ENCODE measurements at regions of chr1 and their contacts with region 1.

Region 1: GRCh38 chr1:18913065-18913835 is 10.9 kb upstream of the ALDH4A1 start:
- DNase-seq: peak; percentile 74 to 92
- ATAC-seq: peak; percentile 83 to 91
- H3K4me3 ChIP-seq: no peak overlapping the region
- H3K27ac ChIP-seq: peak overlapping the region; percentile 46 to 79; a peak in 4 of 6 replicates
- H3K4me1 ChIP-seq: peaks cover 24% of the 10 kb centered on the region
- CTCF ChIP-seq: peak; percentile 95
- EP300 ChIP-seq: no peak
- POLR2A ChIP-seq: no peak
- RAD21 ChIP-seq: peak; percentile 80 to 89

Region 2: GRCh38 chr1:18783705-18784481 is 129.4 kb before region 1 on chr1:
- CTCF ChIA-PET with region 1: no interaction called
- POLR2A ChIA-PET with region 1: no interaction called
- DNase-seq: no peak
- ATAC-seq: no peak
- H3K4me3 ChIP-seq: no peak overlapping the region
- H3K27ac ChIP-seq: no peak overlapping the region
- H3K4me1 ChIP-seq: no peaks in the 10 kb centered on the region
- CTCF ChIP-seq: no peak
- EP300 ChIP-seq: no peak
- POLR2A ChIP-seq: no peak
- RAD21 ChIP-seq: no peak

Region 3: DNA sequence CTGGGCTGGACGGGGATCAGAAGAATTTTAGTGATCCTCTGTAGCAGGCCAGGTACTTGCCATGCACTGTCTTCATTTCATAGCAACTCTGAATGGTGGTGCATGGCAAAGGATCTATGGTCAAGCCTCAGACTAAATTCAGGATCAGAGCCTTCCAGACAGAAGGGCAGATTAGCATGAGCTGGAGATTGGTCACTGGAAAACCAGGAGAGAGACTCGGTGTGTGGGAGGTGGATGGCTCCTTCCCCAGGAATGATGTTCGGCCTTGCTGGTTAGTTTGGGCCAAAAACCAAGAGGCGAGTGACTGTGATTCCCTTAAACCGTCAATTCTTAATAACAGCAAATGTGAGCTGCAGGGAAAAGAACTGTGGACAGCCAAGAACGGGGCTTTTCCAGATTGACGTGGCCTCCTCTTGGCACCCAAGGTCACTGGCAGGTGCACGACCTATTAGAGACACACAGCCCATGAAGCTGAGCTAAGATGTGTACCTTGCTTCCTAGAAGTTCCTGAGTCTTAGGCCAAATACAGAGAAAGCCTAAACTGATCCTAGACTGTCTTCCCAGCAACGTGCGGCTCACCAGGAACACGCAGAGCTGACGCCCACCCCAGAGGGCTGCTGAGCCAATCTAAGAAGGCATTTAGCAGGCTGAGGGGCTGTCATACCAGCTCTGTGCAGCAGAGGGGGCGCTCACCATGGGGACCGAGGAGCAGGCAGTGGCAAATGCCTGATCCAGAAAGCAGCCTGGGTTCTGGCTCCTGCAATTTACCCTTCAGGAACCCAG is 29.4 kb before region 1 on chr1:
- CTCF ChIA-PET with region 1: interaction called, 17 read pairs
- POLR2A ChIA-PET with region 1: no interaction called
- DNase-seq: peak; percentile 50 to 61
- ATAC-seq: peak; percentile 73 to 90
- H3K4me3 ChIP-seq: no peak overlapping the region
- H3K27ac ChIP-seq: no peak overlapping the region; a peak in 1 of 6 replicates
- H3K4me1 ChIP-seq: peaks cover 9% of the 10 kb centered on the region; the same call in 2 of the 3 replicates
- CTCF ChIP-seq: peak; percentile 63
- EP300 ChIP-seq: no peak
- POLR2A ChIP-seq: no peak
- RAD21 ChIP-seq: peak; percentile 77 to 81

Region 4: GRCh38 chr1:18926315-18927081 is 13.2 kb after region 1 on chr1:
- CTCF ChIA-PET with region 1: interaction called, 77 read pairs
- POLR2A ChIA-PET with region 1: interaction called, 3 read pairs
- DNase-seq: peak; percentile 73 to 84
- ATAC-seq: peak; percentile 63 to 67; a peak in 5 of 6 replicates
- H3K4me3 ChIP-seq: no peak overlapping the region
- H3K27ac ChIP-seq: peak overlapping the region; percentile 78 to 94
- H3K4me1 ChIP-seq: peaks cover 83% of the 10 kb centered on the region
- CTCF ChIP-seq: no peak
- EP300 ChIP-seq: no peak
- POLR2A ChIP-seq: no peak
- RAD21 ChIP-seq: no peak

Region 5: GRCh38 chr1:18965206-18966173 is 52.2 kb after region 1 on chr1:
- CTCF ChIA-PET with region 1: interaction called, 23 read pairs
- POLR2A ChIA-PET with region 1: no interaction called
- DNase-seq: peak in 1 of 2 experiments; percentile 56
- ATAC-seq: peak; percentile 56 to 58; a peak in 4 of 6 replicates
- H3K4me3 ChIP-seq: no peak overlapping the region
- H3K27ac ChIP-seq: peak overlapping the region; percentile 15 to 76; a peak in 5 of 6 replicates
- H3K4me1 ChIP-seq: peaks cover 35% of the 10 kb centered on the region
- CTCF ChIP-seq: no peak
- EP300 ChIP-seq: no peak
- POLR2A ChIP-seq: no peak
- RAD21 ChIP-seq: no peak

Region 6: DNA sequence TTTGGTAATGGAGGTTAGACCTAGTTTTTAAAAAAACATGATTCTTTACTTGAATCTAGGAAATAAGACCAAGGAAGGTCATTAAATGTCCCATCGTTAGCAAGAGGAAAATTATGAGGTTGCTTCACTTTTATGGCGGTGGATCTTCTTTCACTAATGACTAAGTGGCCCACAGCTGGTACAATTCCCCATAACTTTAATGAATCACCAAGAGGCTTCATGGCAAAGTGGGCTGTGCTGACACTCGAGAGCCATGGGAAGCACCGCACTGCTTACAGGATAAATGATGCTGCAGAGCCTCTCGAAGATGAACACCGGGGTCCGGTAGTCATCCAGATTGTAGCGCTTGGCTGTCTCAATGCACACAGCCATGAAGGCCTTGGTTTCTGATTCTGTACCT is 188.0 kb after region 1 on chr1:
- CTCF ChIA-PET with region 1: interaction called, 319 read pairs
- POLR2A ChIA-PET with region 1: no interaction called
- DNase-seq: no peak
- ATAC-seq: no peak
- H3K4me3 ChIP-seq: no peak overlapping the region
- H3K27ac ChIP-seq: no peak overlapping the region
- H3K4me1 ChIP-seq: 0 out of 3 replicates have a peak, but pooled peaks cover 3% of the 10 kb centered on the region
- CTCF ChIP-seq: no peak
- EP300 ChIP-seq: no peak
- POLR2A ChIP-seq: no peak
- RAD21 ChIP-seq: no peak